ENCODE measurements at regions of chr19 and their contacts with region 1.

Region 1: DNA sequence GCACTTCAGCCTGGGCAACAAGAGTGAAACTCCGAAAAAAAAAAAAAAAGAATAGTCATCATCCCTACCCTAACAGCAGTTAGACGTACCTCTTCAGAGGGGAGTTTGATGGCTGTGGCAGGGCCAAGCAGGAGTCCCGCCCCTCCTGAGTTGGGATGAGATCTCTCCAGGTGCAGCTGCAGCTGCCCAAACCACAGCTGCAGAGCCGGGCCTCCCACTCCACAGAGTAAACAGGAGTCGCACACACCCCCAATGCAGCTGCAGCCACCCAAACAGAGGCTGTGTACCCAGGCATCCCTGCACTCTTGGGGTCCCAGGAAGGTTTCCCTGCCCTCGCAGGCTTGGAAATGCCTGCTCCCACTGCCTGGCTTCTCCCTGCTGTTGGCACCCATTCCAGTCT is 17.4 kb upstream of the MLLT1 start:
- DNase-seq: no peak
- H3K4me3 ChIP-seq: no peak overlapping the region
- H3K27ac ChIP-seq: no peak overlapping the region
- H3K4me1 ChIP-seq: no peaks in the 10 kb centered on the region
- H3K27me3 ChIP-seq: no peaks in the 10 kb centered on the region
- CTCF ChIP-seq: no peak
- EP300 ChIP-seq: no peak
- POLR2A ChIP-seq: no peak

Region 2: GRCh38 chr19:6161271-6161850 is 135.8 kb before region 1 on chr19:
- in situ Hi-C with region 1: no loop called
- intact Hi-C with region 1: loop called (anchors 1 kb)
- DNase-seq: peak; percentile 13
- H3K4me3 ChIP-seq: no peak overlapping the region
- H3K27ac ChIP-seq: no peak overlapping the region
- H3K4me1 ChIP-seq: peaks cover 0 to 3% (median 0%) of the 10 kb centered on the region in 4 donors
- H3K27me3 ChIP-seq: no peaks in the 10 kb centered on the region
- CTCF ChIP-seq: no peak
- EP300 ChIP-seq: no peak
- POLR2A ChIP-seq: no peak

Region 3: GRCh38 chr19:6218491-6219162 is 78.6 kb before region 1 on chr19:
- in situ Hi-C with region 1: no loop called
- intact Hi-C with region 1: loop called (anchors 5 kb)
- DNase-seq: peak; percentile 89
- H3K4me3 ChIP-seq: no peak overlapping the region
- H3K27ac ChIP-seq: peak overlapping the region in 2 of 4 donors; percentile 13 to 62
- H3K4me1 ChIP-seq: peaks cover 6 to 36% (median 24%) of the 10 kb centered on the region in 4 donors
- H3K27me3 ChIP-seq: no peaks in the 10 kb centered on the region
- CTCF ChIP-seq: peak; percentile 97 to 99 (median 98)
- EP300 ChIP-seq: no peak
- POLR2A ChIP-seq: no peak

Region 4: GRCh38 chr19:6378041-6378440 is 80.8 kb after region 1 on chr19:
- in situ Hi-C with region 1: no loop called
- intact Hi-C with region 1: no loop called
- DNase-seq: no peak
- H3K4me3 ChIP-seq: no peak overlapping the region
- H3K27ac ChIP-seq: peak overlapping the region in 2 of 4 donors; percentile 12 to 33
- H3K4me1 ChIP-seq: peaks cover 5 to 10% (median 7%) of the 10 kb centered on the region in 4 donors
- H3K27me3 ChIP-seq: no peaks in the 10 kb centered on the region
- CTCF ChIP-seq: no peak
- EP300 ChIP-seq: no peak
- POLR2A ChIP-seq: no peak

Measured in transverse colon (tissue), 4 donors.